Calu3 (cell line): ENCODE measurements at regions of chr1 and their contacts with region 1.

Region 1: DNA sequence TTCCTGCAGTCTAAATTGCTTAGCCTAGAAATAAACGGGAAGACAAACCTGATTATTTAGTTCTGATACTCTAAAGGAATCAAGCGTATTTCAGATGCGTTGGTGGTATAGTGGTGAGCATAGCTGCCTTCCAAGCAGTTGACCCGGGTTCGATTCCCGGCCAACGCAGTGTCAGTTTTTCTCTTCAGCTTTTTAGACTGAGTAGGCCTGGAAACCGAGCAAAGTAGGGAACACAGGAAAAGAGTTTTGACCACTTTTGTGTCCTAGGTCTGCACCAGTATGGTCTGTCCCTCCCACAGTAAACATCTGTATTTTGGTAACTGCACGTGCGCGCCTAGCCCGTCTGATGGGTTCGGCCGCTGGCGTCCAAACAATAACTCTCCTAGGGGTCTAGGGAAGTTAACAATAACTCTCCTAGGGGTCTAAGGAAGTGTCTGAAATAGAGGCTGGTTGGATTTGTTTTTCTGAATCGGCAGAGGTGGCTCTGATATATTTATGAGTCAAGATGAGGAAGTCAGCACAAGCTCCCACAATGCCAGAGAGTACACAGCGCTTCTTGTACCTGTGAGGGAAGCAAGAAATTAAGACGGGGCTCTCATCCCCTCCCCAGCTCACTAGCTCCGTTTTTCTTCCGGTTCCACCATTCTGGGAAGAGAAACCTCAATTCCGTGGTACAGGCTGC is 15.6 kb upstream of the HJV start:
- DNase-seq: peak; percentile 86
- H3K4me3 Mint-ChIP-seq: peak overlapping the region; percentile 89
- H3K27ac Mint-ChIP-seq: peak overlapping the region; percentile 98
- H3K4me1 Mint-ChIP-seq: peaks cover 31% of the 10 kb centered on the region
- H3K27me3 Mint-ChIP-seq: peaks cover 11% of the 10 kb centered on the region
- CTCF ChIP-seq: no peak

Region 2: GRCh38 chr1:145823565-145824498 is 213.3 kb before region 1 on chr1 and contains the starts of genes POLR3C and RNF115:
- CTCF ChIA-PET with region 1: no interaction called
- intact Hi-C with region 1: no loop called
- DNase-seq: peak; percentile 85
- H3K4me3 Mint-ChIP-seq: peak within 1 kb of the TSS; percentile 89
- H3K27ac Mint-ChIP-seq: peak within 1 kb of the TSS; percentile 76
- H3K4me1 Mint-ChIP-seq: no peaks in the 10 kb centered on the region
- H3K27me3 Mint-ChIP-seq: no peaks in the 10 kb centered on the region
- CTCF ChIP-seq: no peak
- total RNA-seq, gene POLR3C: 29.3 and 33.0 TPM in 2 replicates
- total RNA-seq, gene RNF115: 9.5 and 9.9 TPM in 2 replicates

Region 3: DNA sequence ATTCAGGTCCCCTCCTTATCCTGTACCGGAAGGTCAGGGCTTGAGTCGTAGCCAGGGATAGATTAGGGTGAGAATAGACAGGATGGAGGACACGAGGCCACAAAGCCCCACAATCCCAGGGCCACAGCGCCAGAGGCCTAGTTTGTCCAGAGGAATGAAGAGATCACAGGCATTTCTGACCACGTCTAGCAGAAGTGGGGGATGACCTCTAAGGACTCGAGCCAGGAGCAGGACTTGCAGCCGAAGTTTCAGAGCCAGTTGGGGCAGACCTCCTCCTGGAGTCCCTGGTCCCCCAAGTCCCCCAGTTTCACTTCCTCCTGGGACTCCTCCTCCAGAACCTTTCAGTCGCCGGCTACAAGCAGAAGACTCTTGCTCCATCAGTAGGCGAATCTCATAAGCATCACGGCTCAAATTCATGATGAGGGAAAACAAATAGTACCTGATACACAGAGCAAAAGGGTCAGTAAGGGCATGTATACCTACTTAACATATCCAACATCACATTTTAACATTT is 124.9 kb before region 1 on chr1:
- CTCF ChIA-PET with region 1: no interaction called
- intact Hi-C with region 1: no loop called
- DNase-seq: no peak
- H3K4me3 Mint-ChIP-seq: no peak overlapping the region
- H3K27ac Mint-ChIP-seq: no peak overlapping the region
- H3K4me1 Mint-ChIP-seq: peaks cover 8% of the 10 kb centered on the region
- H3K27me3 Mint-ChIP-seq: no peaks in the 10 kb centered on the region
- CTCF ChIP-seq: no peak

Region 4: GRCh38 chr1:146049436-146049835 is 12.3 kb after region 1 on chr1:
- CTCF ChIA-PET with region 1: interaction called, 12 read pairs
- intact Hi-C with region 1: no loop called
- DNase-seq: no peak
- H3K4me3 Mint-ChIP-seq: no peak overlapping the region
- H3K27ac Mint-ChIP-seq: no peak overlapping the region
- H3K4me1 Mint-ChIP-seq: peaks cover 19% of the 10 kb centered on the region
- H3K27me3 Mint-ChIP-seq: no peaks in the 10 kb centered on the region
- CTCF ChIP-seq: no peak